ENCODE measurements at regions of chr2 and their contacts with region 1.

Region 1: GRCh38 chr2:240624950-240625621 is at the start of gene GPR35:
- DNase-seq: peak; percentile 94
- ATAC-seq: peak; percentile 66
- H3K4me3 Mint-ChIP-seq: peak within 1 kb of the TSS; percentile 74
- H3K27ac Mint-ChIP-seq: peak within 1 kb of the TSS; percentile 93
- H3K4me1 Mint-ChIP-seq: peaks cover 62% of the 10 kb centered on the region
- H3K27me3 Mint-ChIP-seq: no peaks in the 10 kb centered on the region
- total RNA-seq, gene GPR35: 14.4 to 35.4 TPM

Region 2: GRCh38 chr2:240586198-240586918 is 38.7 kb before region 1 on chr2 and contains the start of gene CAPN10:
- CTCF ChIA-PET with region 1: interaction called, 62 read pairs
- DNase-seq: peak; percentile 98
- ATAC-seq: peak; percentile 91
- H3K4me3 Mint-ChIP-seq: peak within 1 kb of the TSS; percentile 91
- H3K27ac Mint-ChIP-seq: peak within 1 kb of the TSS; percentile 89
- H3K4me1 Mint-ChIP-seq: peaks cover 47% of the 10 kb centered on the region
- H3K27me3 Mint-ChIP-seq: no peaks in the 10 kb centered on the region
- total RNA-seq, gene CAPN10: 54.0 to 75.8 TPM

Region 3: DNA sequence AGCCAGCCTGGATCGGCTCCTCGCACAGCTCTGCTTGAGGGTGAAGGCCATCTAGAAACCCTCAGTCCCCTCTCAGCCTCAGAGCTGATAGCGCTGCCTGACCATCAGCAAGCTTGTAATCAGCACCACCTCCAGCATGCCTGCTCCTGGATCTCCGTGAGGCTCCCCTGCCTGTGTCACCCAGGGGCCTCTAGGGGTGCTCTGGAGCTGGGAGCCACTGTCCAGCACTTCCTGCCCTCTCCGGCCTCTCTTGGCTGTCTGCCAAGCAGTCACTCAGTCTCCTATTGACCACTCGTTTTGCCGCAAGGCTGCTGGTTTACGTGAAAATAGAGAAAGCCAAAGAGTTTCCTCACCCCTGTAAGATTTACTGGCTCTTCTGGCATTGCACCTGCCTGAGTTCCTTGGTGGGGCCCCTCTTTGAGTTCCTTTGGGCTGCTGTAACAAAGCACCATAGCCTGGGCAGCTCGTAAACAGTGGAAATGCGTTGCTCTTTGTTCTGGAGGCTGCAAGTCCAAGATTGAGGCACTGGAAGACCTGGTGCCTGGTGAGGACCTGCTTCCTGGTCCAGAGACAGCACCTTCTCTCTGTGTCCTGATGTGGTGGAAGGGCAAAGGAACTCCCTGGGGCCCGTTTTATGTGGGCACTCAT is 20.7 kb before region 1 on chr2:
- CTCF ChIA-PET with region 1: interaction called, 12 read pairs
- DNase-seq: no peak
- ATAC-seq: peak; percentile 39
- H3K4me3 Mint-ChIP-seq: no peak overlapping the region
- H3K27ac Mint-ChIP-seq: no peak overlapping the region
- H3K4me1 Mint-ChIP-seq: peaks cover 10% of the 10 kb centered on the region
- H3K27me3 Mint-ChIP-seq: no peaks in the 10 kb centered on the region

Region 4: DNA sequence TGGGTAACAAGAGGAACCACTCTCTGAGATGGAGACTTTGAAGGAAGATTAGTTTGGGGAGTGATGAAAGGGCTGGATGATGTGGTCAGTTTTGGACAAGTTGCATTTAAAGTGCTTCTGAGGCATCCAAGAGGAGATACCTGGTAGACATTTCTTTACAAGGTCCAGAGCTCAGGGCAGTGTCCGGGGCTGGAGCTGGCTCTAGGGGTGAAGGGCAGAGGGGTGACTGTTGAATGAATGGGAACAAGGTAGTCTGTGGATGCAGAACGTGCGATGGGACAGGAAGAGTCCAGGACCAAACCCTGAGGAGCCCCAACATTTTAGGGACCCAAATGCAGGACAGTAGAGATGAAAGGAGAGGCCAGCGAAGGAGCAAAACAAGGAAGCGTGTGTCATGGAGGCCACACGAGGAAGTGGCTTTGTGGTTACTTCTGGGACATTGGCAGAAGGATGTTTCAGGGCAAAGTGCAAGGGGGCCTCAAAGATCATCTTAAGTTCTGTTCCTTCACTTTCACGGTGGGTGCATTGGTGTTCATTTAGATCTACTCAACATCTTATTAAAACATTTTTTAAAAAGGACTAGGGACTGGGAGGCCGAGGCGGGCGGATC is 13.4 kb before region 1 on chr2:
- CTCF ChIA-PET with region 1: interaction called, 27 read pairs
- DNase-seq: peak; percentile 85
- ATAC-seq: peak; percentile 48
- H3K4me3 Mint-ChIP-seq: peak overlapping the region; percentile 49
- H3K27ac Mint-ChIP-seq: no peak overlapping the region
- H3K4me1 Mint-ChIP-seq: peaks cover 42% of the 10 kb centered on the region
- H3K27me3 Mint-ChIP-seq: no peaks in the 10 kb centered on the region

Measured in activated CD8-positive, alpha-beta memory T cell treated with anti-CD3 and anti-CD28 coated beads, Interleukin-2, amount 10 ng/mL, durations not matched to agents 7 days and 5 days (primary cell).